ENCODE measurements at regions of chr12 and their contacts with region 1.

Region 1: GRCh38 chr12:1795785-1796514 is 24.4 kb upstream of the LRTM2 start:
- DNase-seq: peak; percentile 85 to 90
- ATAC-seq: peak; percentile 95 to 98
- H3K4me3 ChIP-seq: peak overlapping the region; percentile 54
- H3K27ac ChIP-seq: peak overlapping the region; percentile 78 to 85
- H3K4me1 ChIP-seq: peaks cover 10% of the 10 kb centered on the region
- CTCF ChIP-seq: peak; percentile 98
- EP300 ChIP-seq: no peak
- POLR2A ChIP-seq: peak; percentile 87
- RAD21 ChIP-seq: peak; percentile 90 to 99

Region 2: GRCh38 chr12:1634590-1635191 is 161.3 kb before region 1 on chr12:
- CTCF ChIA-PET with region 1: interaction called, 210 read pairs
- POLR2A ChIA-PET with region 1: no interaction called
- DNase-seq: peak; percentile 76 to 82
- ATAC-seq: peak; percentile 74 to 87
- H3K4me3 ChIP-seq: no peak overlapping the region
- H3K27ac ChIP-seq: no peak overlapping the region
- H3K4me1 ChIP-seq: peaks cover 3% of the 10 kb centered on the region; the same call in 1 of the 3 replicates
- CTCF ChIP-seq: peak; percentile 76
- EP300 ChIP-seq: no peak
- POLR2A ChIP-seq: no peak
- RAD21 ChIP-seq: peak; percentile 73 to 80

Region 3: DNA sequence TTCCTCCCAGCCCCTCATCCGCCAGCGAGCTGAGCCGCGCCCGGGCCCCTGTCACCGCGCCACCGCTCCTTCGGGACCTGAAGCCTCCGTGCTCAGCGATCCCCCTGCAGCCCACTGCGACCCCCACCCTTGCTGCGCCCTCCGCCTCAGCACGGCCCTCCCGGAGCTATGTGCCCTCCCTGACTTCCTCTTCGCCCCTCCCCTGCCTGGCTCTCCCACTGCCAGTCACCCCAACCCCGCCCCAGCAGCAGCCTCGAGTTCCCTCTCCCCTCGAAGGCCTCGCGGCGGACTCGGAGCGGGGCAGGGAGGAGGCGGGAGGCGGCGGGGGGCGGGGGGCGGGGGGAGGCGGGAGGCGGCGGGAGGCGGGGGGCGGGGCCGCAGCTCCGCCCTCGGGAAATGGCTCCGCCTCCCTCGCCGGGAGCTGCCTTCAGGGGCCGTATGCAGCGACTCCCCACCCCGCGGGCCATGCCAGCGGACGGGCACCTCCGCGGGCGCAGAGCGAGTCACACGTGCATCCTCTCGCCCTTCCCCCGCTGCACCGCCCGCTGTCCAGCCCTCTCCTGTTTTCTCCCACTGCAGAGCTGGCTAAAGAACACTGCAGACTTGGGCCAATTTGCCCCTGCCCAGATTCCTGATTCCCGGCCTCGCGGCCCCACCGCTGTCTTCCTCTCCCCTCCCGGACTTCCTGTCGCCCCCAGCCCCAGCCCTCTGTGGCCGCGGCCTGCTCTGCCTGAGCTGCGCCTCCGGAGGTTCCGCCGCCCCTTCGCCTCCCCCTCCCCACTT is 134.2 kb before region 1 on chr12:
- CTCF ChIA-PET with region 1: interaction called, 483 read pairs
- POLR2A ChIA-PET with region 1: interaction called, 3 read pairs
- DNase-seq: peak; percentile 83 to 91
- ATAC-seq: peak; percentile 91 to 92
- H3K4me3 ChIP-seq: peak overlapping the region; percentile 45
- H3K27ac ChIP-seq: peak overlapping the region; percentile 60 to 94
- H3K4me1 ChIP-seq: peaks cover 21% of the 10 kb centered on the region; the same call in 2 of the 3 replicates
- CTCF ChIP-seq: no peak
- EP300 ChIP-seq: no peak
- POLR2A ChIP-seq: peak; percentile 68
- RAD21 ChIP-seq: no peak

Region 4: DNA sequence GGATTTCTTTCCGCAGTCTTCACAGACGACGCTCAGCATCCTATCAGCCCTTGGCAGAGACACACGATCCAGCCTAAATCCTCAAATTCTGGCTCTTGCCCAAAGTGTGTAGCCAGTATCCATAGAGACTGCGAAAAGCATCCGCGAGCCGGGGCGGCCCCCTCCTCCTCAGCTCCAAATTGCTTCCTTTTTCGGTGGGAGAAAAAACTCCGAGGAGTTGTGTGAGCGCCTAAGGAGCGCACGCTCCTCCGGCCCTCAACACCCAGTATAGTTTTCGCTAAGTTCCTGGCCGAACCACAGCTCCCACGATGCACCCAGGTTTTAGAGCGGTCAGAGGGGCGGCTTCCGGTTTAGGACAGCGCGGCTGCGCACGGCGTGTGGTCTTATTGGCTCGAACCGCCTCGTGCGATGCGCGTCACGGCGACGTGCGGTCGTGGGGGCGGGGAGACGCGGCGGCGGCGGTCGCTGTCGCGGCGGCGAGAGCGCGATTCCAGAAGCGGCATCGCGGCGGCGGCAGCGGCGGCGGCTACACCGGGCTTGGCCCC is 105.3 kb before region 1 on chr12 and contains the start of gene ADIPOR2:
- CTCF ChIA-PET with region 1: interaction called, 22 read pairs
- POLR2A ChIA-PET with region 1: interaction called, 5 read pairs
- DNase-seq: peak; percentile 96 to 98
- ATAC-seq: peak; percentile 98 to 99
- H3K4me3 ChIP-seq: peak within 1 kb of the TSS; percentile 97
- H3K27ac ChIP-seq: peak within 1 kb of the TSS; percentile 95
- H3K4me1 ChIP-seq: peaks cover 19% of the 10 kb centered on the region
- CTCF ChIP-seq: no peak
- EP300 ChIP-seq: no peak
- POLR2A ChIP-seq: peak; percentile 86
- RAD21 ChIP-seq: no peak; a peak in 1 of 5 replicates
- polyA plus RNA-seq, gene ADIPOR2: 65.4 and 80.0 TPM in 2 replicates

Region 5: GRCh38 chr12:1758887-1759286 is 37.1 kb before region 1 on chr12:
- CTCF ChIA-PET with region 1: interaction called, 24 read pairs
- POLR2A ChIA-PET with region 1: no interaction called
- DNase-seq: no peak
- ATAC-seq: no peak
- H3K4me3 ChIP-seq: no peak overlapping the region
- H3K27ac ChIP-seq: peak overlapping the region in 1 of 2 experiments; percentile 15; a peak in 2 of 6 replicates
- H3K4me1 ChIP-seq: peaks cover 18% of the 10 kb centered on the region
- CTCF ChIP-seq: no peak
- EP300 ChIP-seq: no peak
- POLR2A ChIP-seq: no peak
- RAD21 ChIP-seq: no peak

Region 6: DNA sequence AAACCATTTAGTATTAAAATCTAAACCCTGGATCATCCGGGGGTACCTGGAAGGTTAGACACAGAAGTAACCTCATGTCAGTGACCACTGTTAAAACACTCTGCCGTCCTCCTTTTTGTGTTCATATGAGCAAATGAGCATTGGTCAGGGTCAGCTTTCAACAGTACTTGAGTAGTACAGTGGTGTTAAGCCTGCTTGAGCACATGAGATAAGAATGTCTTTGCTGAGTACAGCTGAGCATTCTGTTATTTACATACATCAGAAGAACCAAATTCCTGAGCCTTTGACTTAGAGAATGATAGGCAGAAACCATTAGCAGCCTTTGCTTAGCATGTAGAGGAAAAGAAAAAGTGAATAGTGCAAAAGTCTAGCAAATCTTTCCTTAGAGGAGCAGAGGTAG is 14.2 kb before region 1 on chr12:
- CTCF ChIA-PET with region 1: interaction called, 32 read pairs
- POLR2A ChIA-PET with region 1: no interaction called
- DNase-seq: no peak
- ATAC-seq: no peak
- H3K4me3 ChIP-seq: no peak overlapping the region
- H3K27ac ChIP-seq: no peak overlapping the region
- H3K4me1 ChIP-seq: peaks cover 13% of the 10 kb centered on the region
- CTCF ChIP-seq: no peak
- EP300 ChIP-seq: no peak
- POLR2A ChIP-seq: no peak
- RAD21 ChIP-seq: no peak

Region 7: GRCh38 chr12:2034633-2035430 is 238.9 kb after region 1 on chr12:
- CTCF ChIA-PET with region 1: interaction called, 13 read pairs
- POLR2A ChIA-PET with region 1: no interaction called
- DNase-seq: peak; percentile 75 to 83
- ATAC-seq: peak; percentile 95 to 99
- H3K4me3 ChIP-seq: peak overlapping the region; percentile 34
- H3K27ac ChIP-seq: peak overlapping the region; percentile 35 to 57; a peak in 3 of 6 replicates
- H3K4me1 ChIP-seq: 0 out of 3 replicates have a peak, but pooled peaks cover 3% of the 10 kb centered on the region
- CTCF ChIP-seq: peak; percentile 85
- EP300 ChIP-seq: no peak
- POLR2A ChIP-seq: peak; percentile 37; the same call in 1 of the 2 replicates
- RAD21 ChIP-seq: peak; percentile 58 to 74